ENCODE measurements at regions of chr11 and their contacts with region 1.

Region 1: DNA sequence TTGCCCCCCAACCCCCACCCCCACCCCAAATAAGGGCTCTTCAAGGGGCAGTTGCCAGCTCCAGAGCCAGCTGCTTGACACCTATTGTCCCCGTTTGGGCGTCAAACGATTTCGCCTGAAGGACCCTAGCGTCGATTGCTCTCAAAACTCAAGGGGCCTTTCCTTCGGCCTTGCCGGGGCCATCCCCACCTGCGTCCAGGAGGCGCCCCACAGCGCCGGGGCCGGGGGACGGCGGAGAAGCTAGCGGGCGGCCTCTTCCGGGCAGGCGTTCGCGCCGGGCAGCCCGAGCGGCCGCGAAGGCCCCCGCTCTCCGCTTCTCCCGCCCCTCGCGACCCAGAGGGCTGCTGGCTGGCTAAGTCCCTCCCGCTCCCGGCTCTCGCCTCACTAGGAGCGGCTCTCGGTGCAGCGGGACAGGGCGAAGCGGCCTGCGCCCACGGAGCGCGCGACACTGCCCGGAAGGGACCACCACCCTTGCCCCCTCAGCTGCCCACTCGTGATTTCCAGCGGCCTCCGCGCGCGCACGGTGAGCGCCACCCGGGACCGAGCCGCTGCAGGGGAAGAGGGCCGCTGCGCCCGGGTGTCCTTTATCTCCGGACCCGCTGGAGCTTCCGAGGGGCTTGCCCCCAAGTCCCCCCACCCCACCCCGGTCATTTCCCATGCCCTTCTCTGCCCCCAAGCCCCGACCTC is at the start of gene CAPRIN1:
- DNase-seq: peak; percentile 87 to 94
- ATAC-seq: peak; percentile 91 to 92 (median 91)
- H3K4me3 ChIP-seq: peak within 1 kb of the TSS; percentile 92
- H3K27ac ChIP-seq: peak within 1 kb of the TSS; percentile 95
- H3K4me1 ChIP-seq: peaks cover 40% of the 10 kb centered on the region
- H3K27me3 ChIP-seq: no peaks in the 10 kb centered on the region
- CTCF ChIP-seq: no peak
- total RNA-seq, gene CAPRIN1: 70.3 to 122 (median 109) TPM

Region 2: DNA sequence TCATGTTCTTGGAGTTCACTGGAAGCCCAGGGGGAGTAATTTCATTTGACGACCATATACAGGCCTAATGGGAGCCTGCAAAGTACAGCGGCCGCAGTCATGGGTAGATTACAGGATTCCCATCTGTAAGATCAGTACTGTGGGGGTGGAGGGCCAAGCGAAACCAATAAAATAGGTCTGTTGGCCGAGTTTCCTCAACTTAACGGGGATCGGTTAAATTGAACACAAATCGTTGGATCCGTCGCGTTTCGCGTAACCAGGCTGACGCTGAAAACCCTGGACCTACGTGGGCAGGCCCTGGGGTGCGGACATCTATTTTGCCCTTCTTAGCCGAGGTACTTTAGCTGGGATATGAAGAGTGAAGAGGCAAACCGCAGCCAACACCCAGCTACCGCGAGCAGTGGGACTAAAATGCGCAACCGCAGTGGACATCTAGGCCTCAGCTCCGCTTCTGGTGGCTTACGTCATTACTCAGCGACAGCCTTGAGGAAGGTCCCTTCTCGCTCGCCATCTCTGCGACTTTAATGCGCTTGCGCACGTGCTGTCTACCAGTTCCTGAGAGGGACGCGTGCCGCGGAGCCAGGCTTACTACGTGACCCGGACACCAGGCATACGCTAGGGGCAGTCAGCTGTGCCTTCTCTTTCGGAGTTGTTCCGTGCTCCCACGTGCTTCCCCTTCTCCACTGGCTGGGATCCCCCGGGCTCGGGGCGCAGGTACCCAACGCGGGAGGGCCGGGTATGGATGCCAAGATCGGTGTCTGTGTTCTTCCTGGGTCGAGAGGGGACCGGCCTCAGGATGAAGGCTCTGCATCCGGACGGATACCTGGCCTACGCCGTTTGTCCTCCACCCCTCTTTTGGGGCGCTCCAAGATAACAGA is 53.8 kb after region 1 on chr11 and contains the start of gene NAT10:
- intact Hi-C with region 1: loop called (anchors 5 to 10 kb)
- DNase-seq: peak; percentile 97 to 99
- ATAC-seq: peak; percentile 94 to 98 (median 97)
- H3K4me3 ChIP-seq: peak within 1 kb of the TSS; percentile 91
- H3K27ac ChIP-seq: peak within 1 kb of the TSS; percentile 96
- H3K4me1 ChIP-seq: peaks cover 26% of the 10 kb centered on the region
- H3K27me3 ChIP-seq: no peaks in the 10 kb centered on the region
- CTCF ChIP-seq: peak; percentile 16
- total RNA-seq, gene NAT10: 26.7 to 51.5 (median 37.0) TPM